ENCODE measurements at regions of chr2 and their contacts with region 1.

Region 1: DNA sequence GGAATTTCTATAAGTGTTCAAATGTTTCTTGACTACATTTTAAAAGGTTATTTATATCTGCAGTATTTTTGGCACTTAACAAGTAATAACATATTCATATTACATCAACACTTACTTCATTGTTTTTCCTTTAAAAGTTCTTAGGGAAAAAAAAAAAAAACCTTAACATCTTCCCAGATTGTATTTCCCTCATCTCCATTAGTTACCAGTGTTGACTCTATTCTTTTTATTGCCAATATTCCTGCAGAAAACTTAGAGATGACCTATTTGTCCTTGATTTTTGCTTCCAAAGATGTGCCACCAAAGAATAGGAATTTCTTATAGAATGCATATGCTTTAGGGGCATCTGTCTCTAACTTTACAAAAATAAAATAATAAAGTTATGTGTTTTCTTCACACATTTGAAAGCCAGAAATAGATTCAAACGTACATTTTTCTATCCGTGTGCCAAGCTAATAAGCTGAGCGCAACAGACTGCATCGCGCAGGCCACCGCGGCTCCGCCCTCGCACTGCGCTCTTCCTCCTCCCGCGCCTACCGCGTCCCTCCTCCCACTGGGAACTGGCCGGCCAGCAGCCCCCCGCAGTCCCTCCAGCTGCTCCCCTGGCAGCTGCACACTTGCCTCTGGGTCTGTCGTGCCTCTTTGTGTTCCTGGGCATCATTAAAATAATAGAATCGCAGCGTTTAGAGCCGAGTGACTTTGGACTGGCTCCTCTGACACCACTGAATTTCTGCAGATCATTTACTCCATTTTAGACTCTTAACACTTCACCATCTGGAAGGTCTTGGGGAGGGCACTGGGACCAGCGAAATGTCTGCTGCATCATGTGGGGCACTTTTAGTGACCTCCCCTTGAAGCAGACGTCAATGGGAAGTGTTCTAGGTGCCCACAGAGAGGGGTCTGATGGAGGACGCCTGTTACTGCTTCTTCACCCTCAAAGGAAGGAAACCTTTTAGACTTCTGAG is 21.2 kb upstream of the NAB1 start:
- DNase-seq: peak in 6 of 9 donors; percentile 26 to 47 (median 36)
- ATAC-seq: peak; percentile 87
- H3K4me3 ChIP-seq: peak overlapping the region; percentile 64
- H3K4me3 Mint-ChIP-seq: peak overlapping the region; percentile 89 to 98 (median 96)
- H3K27ac ChIP-seq: peak overlapping the region; percentile 63
- H3K27ac Mint-ChIP-seq: peak overlapping the region; percentile 61 to 94 (median 88)
- H3K4me1 ChIP-seq: no peaks in the 10 kb centered on the region
- H3K4me1 Mint-ChIP-seq: peaks cover 9 to 39% (median 33%) of the 10 kb centered on the region in 7 donors
- H3K27me3 ChIP-seq: no peaks in the 10 kb centered on the region
- H3K27me3 Mint-ChIP-seq: peaks cover 0 to 12% (median 0%) of the 10 kb centered on the region in 5 donors

Region 2: DNA sequence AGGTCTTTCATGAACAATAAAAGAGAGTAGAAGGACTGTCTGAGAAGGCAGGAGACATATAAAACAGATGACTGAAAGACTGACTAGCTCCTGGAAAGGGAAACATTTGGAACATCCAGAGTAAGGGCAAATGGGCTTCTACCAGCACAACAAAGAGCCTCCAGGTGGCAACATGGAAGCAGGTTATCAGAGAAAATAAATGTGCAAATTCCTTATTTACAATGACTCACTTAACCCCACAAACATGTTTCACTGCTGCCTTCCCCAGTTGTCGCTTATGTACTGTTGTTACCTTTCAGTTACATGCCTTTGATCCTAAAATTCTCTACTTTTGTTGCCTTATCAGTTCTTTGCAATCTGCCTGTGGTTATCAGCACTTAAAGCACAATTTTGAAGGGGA is 425.1 kb before region 1 on chr2:
- CTCF ChIA-PET with region 1: no interaction called
- POLR2A ChIA-PET with region 1: no interaction called
- intact Hi-C with region 1: no loop called
- DNase-seq: no peak
- ATAC-seq: no peak
- H3K4me3 ChIP-seq: no peak overlapping the region
- H3K4me3 Mint-ChIP-seq: no peak overlapping the region
- H3K27ac ChIP-seq: no peak overlapping the region
- H3K27ac Mint-ChIP-seq: no peak overlapping the region
- H3K4me1 ChIP-seq: no peaks in the 10 kb centered on the region
- H3K4me1 Mint-ChIP-seq: peaks cover 0 to 2% (median 0%) of the 10 kb centered on the region in 7 donors
- H3K27me3 ChIP-seq: no peaks in the 10 kb centered on the region
- H3K27me3 Mint-ChIP-seq: no peaks in the 10 kb centered on the region

Region 3: GRCh38 chr2:190578158-190579057 is 49.3 kb before region 1 on chr2:
- CTCF ChIA-PET with region 1: interaction called, 10 read pairs
- POLR2A ChIA-PET with region 1: no interaction called
- intact Hi-C with region 1: loop called in 1 of 2 experiments (anchors 5 kb)
- DNase-seq: peak in 5 of 9 donors; percentile 11 to 23 (median 20)
- ATAC-seq: peak; percentile 84
- H3K4me3 ChIP-seq: no peak overlapping the region
- H3K4me3 Mint-ChIP-seq: peak overlapping the region in 8 of 10 donors; percentile 14 to 72 (median 52)
- H3K27ac ChIP-seq: peak overlapping the region; percentile 7
- H3K27ac Mint-ChIP-seq: peak overlapping the region in 8 of 9 donors; percentile 8 to 81 (median 50)
- H3K4me1 ChIP-seq: peaks cover 10 to 17% of the 10 kb centered on the region in 2 donors
- H3K4me1 Mint-ChIP-seq: peaks cover 18 to 52% (median 42%) of the 10 kb centered on the region in 7 donors
- H3K27me3 ChIP-seq: no peaks in the 10 kb centered on the region
- H3K27me3 Mint-ChIP-seq: no peaks in the 10 kb centered on the region

Region 4: GRCh38 chr2:190607014-190607597 is 20.6 kb before region 1 on chr2:
- CTCF ChIA-PET with region 1: no interaction called
- POLR2A ChIA-PET with region 1: no interaction called
- intact Hi-C with region 1: no loop called
- DNase-seq: no peak
- ATAC-seq: no peak
- H3K4me3 ChIP-seq: no peak overlapping the region
- H3K4me3 Mint-ChIP-seq: no peak overlapping the region
- H3K27ac ChIP-seq: no peak overlapping the region
- H3K27ac Mint-ChIP-seq: peak overlapping the region in 1 of 9 donors; percentile 74
- H3K4me1 ChIP-seq: no peaks in the 10 kb centered on the region
- H3K4me1 Mint-ChIP-seq: no peaks in the 10 kb centered on the region
- H3K27me3 ChIP-seq: no peaks in the 10 kb centered on the region
- H3K27me3 Mint-ChIP-seq: no peaks in the 10 kb centered on the region

Measured in naive thymus-derived CD4-positive, alpha-beta T cell (primary cell).